PC-9 (cell line): ENCODE measurements at regions of chr5 and their contacts with region 1.

Region 1: DNA sequence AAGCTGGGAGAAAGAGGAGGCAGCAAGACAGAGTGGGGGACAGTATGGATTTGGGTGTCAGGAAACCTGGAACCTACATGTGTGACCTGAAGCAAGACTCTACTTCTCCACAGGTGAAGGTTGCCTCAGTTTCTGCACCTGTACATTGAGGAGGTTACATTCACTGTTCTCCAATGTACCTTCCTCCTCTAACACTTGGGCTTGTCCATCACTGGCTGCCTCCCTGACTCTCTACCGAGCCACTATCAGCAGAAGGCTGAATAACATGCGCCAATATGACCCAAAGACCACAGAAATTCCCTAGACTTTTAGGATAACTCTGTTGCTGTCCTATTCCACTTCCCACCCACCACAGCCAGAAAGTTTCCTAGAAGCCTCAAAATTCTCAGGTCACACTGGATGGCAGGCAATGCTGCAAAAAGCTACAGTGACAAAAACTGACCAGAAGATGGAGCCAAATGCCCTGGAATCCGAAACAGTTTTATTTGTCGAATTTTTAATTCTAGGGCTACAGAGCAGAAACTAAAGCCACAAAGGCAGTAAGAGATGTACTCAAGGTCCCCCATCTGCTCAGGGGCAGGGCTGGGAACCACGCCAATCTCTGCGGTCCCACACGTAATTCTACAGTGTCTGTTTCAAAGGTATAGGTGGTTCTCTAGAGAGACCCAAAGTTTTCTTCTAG is 64.4 kb downstream of the FAM114A2 start:
- DNase-seq: peak in 1 of 2 experiments; percentile 42
- H3K4me3 ChIP-seq: no peak overlapping the region
- H3K27ac ChIP-seq: no peak overlapping the region
- H3K4me1 ChIP-seq: no peaks in the 10 kb centered on the region
- H3K27me3 ChIP-seq: peaks cover 24% of the 10 kb centered on the region; the same call in 1 of the 2 replicates
- CTCF ChIP-seq: peak; percentile 85

Region 2: DNA sequence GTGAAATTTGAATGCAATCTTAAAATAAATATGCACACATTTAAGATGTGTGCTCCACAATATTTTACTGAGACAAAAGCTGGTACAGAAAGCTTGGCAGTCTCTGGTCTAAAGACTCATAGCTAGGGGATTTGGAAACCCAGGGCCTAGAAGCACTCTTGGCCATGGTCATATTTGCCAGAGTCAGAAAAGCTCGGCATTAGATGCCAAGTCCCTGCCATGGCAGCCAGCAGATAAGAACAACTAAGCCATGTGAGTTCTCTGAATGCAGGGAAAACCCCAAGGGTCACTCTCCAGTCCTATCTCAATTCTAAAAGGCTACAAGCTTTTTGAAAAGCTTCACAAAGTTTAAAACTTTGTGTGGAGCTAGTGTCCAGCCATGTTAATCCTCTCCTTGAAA is 55.1 kb before region 1 on chr5:
- CTCF ChIA-PET with region 1: no interaction called
- POLR2A ChIA-PET with region 1: no interaction called
- intact Hi-C with region 1: no loop called
- DNase-seq: no peak
- H3K4me3 ChIP-seq: no peak overlapping the region
- H3K27ac ChIP-seq: no peak overlapping the region
- H3K4me1 ChIP-seq: no peaks in the 10 kb centered on the region
- H3K27me3 ChIP-seq: peaks cover 42% of the 10 kb centered on the region
- CTCF ChIP-seq: no peak

Region 3: DNA sequence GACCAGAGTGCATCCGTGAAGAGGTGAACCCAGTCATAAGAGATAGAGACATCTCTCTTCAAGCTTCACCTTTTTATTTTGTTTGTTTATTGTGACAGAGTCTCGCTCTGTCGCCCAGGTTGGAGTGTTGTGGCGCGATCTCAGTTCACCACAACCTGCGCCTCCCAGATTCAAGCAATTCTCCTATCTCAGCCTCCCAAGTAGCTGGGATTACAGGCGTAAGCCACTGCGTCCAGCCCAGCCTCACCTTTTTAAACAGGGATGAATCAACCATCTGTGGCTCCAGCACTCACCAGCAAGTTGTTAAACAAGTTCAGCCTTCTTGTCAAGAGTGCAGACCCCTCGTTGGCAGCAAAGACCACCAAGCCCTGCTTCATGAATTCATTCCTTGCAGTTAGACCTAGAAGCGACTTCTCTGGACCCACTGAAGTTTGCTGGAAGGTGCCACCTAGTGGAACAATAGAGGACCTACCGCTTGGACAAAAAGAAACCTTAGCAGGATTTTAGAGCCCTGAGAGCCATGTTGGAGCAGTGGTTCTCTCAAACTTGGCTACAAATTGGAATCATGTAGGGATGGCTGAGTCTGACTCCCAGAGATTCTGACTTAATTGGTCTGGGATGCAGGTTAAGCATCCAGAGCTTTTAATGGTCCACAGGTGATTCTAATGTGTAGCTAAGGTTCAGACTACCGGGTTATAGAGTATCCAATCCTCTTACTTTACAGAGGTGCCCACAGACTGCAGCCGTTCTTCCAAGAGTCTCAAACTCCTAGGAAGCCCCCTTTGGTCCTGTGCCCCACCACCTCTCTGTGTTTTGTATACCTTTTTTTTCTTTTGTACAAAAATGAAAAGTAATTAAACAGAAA is 205.8 kb after region 1 on chr5:
- CTCF ChIA-PET with region 1: no interaction called
- POLR2A ChIA-PET with region 1: no interaction called
- intact Hi-C with region 1: loop called (anchors 2 kb)
- DNase-seq: peak in 1 of 2 experiments; percentile 51
- H3K4me3 ChIP-seq: no peak overlapping the region
- H3K27ac ChIP-seq: no peak overlapping the region
- H3K4me1 ChIP-seq: peaks cover 22% of the 10 kb centered on the region
- H3K27me3 ChIP-seq: no peaks in the 10 kb centered on the region
- CTCF ChIP-seq: peak; percentile 89

Region 4: DNA sequence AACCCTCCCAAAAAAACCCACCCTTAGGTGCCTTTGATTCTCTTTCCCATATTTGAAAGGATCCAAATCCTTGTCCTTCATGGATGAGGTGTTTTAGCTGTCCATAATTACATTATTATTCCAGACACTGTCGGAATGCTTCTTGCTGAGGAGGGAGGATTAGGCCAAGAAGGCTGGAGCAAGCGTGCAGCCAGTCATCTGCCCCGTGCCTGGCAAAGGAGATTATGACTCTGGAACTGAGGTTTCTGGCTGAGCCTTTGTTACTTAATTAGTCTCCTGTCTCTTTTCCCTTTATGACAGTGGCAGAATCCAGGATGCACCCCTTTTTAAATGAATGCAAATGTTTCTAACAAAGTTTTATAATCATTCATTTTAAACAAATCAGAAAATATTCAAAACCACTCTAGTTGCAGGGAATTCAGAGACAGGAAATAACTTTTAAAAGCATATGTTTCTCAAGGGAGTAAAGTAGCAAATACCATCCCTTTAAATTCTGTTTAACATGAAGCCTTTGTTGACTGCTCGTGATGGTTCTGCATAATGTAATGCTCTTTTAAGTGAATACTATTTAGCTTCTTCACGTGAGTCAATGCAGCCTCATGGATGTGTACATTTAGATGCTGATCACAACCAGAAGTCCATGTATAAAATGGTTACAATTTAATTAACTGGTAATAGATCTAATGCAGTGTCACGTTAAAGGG is 286.1 kb after region 1 on chr5:
- CTCF ChIA-PET with region 1: no interaction called
- POLR2A ChIA-PET with region 1: no interaction called
- intact Hi-C with region 1: no loop called
- DNase-seq: no peak
- H3K4me3 ChIP-seq: no peak overlapping the region
- H3K27ac ChIP-seq: no peak overlapping the region
- H3K4me1 ChIP-seq: no peaks in the 10 kb centered on the region
- H3K27me3 ChIP-seq: no peaks in the 10 kb centered on the region
- CTCF ChIP-seq: no peak

Region 5: GRCh38 chr5:154467655-154468354 is 493.5 kb after region 1 on chr5:
- CTCF ChIA-PET with region 1: no interaction called
- POLR2A ChIA-PET with region 1: no interaction called
- intact Hi-C with region 1: loop called (anchors 2 kb)
- DNase-seq: peak; percentile 54 to 84
- H3K4me3 ChIP-seq: no peak overlapping the region
- H3K27ac ChIP-seq: no peak overlapping the region
- H3K4me1 ChIP-seq: peaks cover 23% of the 10 kb centered on the region
- H3K27me3 ChIP-seq: no peaks in the 10 kb centered on the region
- CTCF ChIP-seq: peak; percentile 92

Region 6: DNA sequence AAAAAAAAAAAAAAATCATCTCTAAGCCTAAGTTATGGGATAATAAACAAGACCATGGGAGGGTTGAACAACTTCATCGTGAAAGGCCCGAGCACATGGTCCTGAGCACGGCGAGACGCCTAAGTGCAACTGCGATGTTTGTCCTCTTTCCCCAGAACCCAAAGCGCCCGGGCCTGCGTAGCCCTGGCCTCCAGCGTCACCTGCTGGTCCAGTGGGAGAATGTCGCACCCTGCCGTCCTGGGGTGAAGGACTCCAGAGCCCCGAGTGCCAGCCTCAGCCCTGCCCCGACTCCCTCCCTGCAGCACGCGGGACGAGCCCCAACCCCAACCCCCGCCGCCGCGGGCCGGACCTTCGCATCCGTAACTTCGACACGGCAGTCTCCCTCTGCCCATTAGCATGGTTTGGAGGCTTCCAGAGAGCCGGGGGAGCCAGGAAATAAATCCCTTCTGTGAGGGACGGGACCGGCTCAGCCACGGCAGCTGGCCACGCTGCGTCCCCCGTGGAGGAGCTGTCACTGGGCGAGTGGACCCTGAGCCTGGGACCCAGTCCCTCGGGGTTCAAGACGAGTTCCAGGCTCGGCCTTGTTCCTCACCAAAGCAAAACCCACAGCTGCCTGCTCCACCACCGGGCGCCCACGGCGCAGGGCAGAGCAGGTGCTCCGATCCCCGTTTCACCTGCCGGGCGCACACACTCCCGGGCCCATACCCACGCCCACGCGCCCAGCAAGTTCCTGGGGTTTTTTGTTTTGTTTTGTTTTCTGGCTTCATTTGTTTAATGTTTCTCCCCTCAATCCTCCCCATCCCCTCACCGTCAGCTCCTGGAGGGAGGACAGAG is 636.3 kb after region 1 on chr5:
- CTCF ChIA-PET with region 1: no interaction called
- POLR2A ChIA-PET with region 1: interaction called, 4 read pairs
- intact Hi-C with region 1: loop called (anchors 1 kb)
- DNase-seq: peak; percentile 66 to 85
- H3K4me3 ChIP-seq: peak overlapping the region; percentile 45; the same call in 1 of the 2 replicates
- H3K27ac ChIP-seq: no peak overlapping the region
- H3K4me1 ChIP-seq: peaks cover 14% of the 10 kb centered on the region; the same call in 1 of the 2 replicates
- H3K27me3 ChIP-seq: no peaks in the 10 kb centered on the region
- CTCF ChIP-seq: peak; percentile 93

Region 7: GRCh38 chr5:154633138-154633537 is 658.9 kb after region 1 on chr5:
- CTCF ChIA-PET with region 1: no interaction called
- POLR2A ChIA-PET with region 1: no interaction called
- intact Hi-C with region 1: loop called (anchors 2 kb)
- DNase-seq: no peak
- H3K4me3 ChIP-seq: no peak overlapping the region
- H3K27ac ChIP-seq: no peak overlapping the region
- H3K4me1 ChIP-seq: no peaks in the 10 kb centered on the region
- H3K27me3 ChIP-seq: no peaks in the 10 kb centered on the region
- CTCF ChIP-seq: no peak

Region 8: GRCh38 chr5:154811653-154812365 is 837.5 kb after region 1 on chr5:
- CTCF ChIA-PET with region 1: no interaction called
- POLR2A ChIA-PET with region 1: no interaction called
- intact Hi-C with region 1: loop called (anchors 10 kb)
- DNase-seq: peak; percentile 50 to 60
- H3K4me3 ChIP-seq: no peak overlapping the region
- H3K27ac ChIP-seq: no peak overlapping the region
- H3K4me1 ChIP-seq: no peaks in the 10 kb centered on the region
- H3K27me3 ChIP-seq: no peaks in the 10 kb centered on the region
- CTCF ChIP-seq: peak; percentile 93